PC-3 (cell line): ENCODE measurements at regions of chr10 and their contacts with region 1.

Region 1: GRCh38 chr10:26860443-26861204 is at the start of gene ABI1:
- DNase-seq: peak; percentile 96
- ATAC-seq: peak; percentile 85
- H3K4me3 ChIP-seq: peak within 1 kb of the TSS; percentile 97
- H3K27ac ChIP-seq: peak within 1 kb of the TSS; percentile 67
- H3K4me1 ChIP-seq: peaks cover 15% of the 10 kb centered on the region
- H3K27me3 ChIP-seq: no peaks in the 10 kb centered on the region
- CTCF ChIP-seq: no peak
- total RNA-seq, gene ABI1: 20.7 and 25.2 TPM in 2 replicates

Region 2: DNA sequence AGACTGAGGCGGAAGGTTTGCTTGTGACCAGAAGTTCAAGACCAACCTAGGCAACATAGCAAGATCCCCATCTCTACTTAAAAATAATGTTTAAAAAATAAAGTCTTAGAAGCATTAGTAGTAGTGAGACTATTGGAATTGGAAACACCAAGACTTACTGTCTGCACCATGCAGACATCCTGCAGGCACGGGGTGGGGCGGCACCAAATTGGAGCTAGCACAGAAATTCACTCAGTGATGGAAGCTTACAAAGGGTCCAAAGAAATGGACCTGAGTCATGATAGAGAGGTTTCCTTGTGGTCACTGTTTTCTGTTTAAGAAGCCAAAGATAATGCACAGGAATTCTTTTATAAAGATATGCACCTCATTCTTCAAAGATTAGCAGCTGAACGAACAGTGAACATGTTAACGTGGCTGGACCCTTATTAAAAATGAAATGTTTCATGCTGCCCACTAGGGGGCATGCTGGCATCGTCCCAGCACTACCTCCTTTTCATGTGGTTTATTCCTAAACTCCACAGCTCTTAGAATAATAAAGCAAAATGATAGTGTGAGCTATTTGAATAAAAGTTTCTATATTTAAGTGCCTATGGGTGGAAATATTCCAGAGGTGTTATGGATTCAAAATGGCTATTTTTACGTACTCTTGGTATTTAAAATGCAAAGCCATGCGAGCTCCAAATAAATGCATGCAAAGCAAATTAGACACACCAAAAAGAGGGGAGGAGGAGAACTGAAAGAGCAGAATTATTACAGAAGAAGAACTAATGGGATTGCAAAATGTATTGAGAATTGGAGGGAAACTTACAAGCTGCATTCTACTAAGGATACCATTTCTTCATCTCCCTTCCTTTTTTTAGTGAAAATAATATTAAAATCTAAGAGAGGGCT is 134.5 kb before region 1 on chr10:
- CTCF ChIA-PET with region 1: interaction called, 4 read pairs
- POLR2A ChIA-PET with region 1: no interaction called
- intact Hi-C with region 1: loop called (anchors 2 kb)
- DNase-seq: peak; percentile 55
- ATAC-seq: peak; percentile 72
- H3K4me3 ChIP-seq: no peak overlapping the region
- H3K27ac ChIP-seq: 0 out of 2 replicates have a peak overlapping the region, but pooled peaks have one; percentile 9
- H3K4me1 ChIP-seq: peaks cover 11% of the 10 kb centered on the region; the same call in 1 of the 2 replicates
- H3K27me3 ChIP-seq: no peaks in the 10 kb centered on the region
- CTCF ChIP-seq: peak; percentile 82

Region 3: GRCh38 chr10:26832960-26833359 is 27.7 kb before region 1 on chr10:
- CTCF ChIA-PET with region 1: no interaction called
- POLR2A ChIA-PET with region 1: interaction called, 16 read pairs
- intact Hi-C with region 1: no loop called
- DNase-seq: no peak
- ATAC-seq: no peak
- H3K4me3 ChIP-seq: no peak overlapping the region
- H3K27ac ChIP-seq: no peak overlapping the region
- H3K4me1 ChIP-seq: no peaks in the 10 kb centered on the region
- H3K27me3 ChIP-seq: no peaks in the 10 kb centered on the region
- CTCF ChIP-seq: no peak